ENCODE measurements at regions of chr2 and their contacts with region 1.

Region 1: DNA sequence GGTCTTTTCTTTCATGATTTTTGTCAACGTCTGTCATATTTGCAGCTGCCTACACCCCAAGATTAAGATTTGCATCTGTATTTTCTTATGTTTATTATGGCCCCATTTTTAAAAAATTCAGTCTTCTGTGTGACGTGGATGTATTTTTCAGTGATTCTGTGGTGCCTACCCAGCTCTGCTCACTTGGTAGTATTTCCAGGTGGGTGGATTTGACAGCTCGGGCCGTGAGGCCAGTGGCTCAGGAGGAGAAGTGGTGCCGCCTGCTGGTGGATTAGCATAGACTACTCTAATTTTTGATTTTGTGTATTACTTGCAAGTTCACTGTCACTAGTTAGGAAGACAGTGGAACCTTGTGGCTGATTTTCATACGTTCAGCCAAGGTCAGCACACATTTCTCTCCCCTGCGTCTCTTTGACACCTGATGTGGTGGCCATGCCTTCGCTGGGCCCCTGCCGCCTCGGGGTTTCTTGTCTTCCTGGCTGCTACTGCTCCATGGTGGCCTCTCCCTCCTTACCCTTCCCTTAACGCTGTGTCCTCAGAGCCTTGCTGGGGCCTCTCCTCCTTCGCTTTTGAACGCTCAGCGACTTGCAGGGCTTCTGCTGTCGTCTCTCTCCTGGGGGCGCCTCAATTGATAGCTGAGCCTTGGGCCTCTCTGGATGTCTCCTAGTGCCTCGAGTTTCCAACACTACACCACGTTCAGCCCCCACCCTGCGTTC is 89.3 kb downstream of the DGKD start:
- DNase-seq: peak; percentile 80
- ATAC-seq: peak; percentile 69

Region 2: DNA sequence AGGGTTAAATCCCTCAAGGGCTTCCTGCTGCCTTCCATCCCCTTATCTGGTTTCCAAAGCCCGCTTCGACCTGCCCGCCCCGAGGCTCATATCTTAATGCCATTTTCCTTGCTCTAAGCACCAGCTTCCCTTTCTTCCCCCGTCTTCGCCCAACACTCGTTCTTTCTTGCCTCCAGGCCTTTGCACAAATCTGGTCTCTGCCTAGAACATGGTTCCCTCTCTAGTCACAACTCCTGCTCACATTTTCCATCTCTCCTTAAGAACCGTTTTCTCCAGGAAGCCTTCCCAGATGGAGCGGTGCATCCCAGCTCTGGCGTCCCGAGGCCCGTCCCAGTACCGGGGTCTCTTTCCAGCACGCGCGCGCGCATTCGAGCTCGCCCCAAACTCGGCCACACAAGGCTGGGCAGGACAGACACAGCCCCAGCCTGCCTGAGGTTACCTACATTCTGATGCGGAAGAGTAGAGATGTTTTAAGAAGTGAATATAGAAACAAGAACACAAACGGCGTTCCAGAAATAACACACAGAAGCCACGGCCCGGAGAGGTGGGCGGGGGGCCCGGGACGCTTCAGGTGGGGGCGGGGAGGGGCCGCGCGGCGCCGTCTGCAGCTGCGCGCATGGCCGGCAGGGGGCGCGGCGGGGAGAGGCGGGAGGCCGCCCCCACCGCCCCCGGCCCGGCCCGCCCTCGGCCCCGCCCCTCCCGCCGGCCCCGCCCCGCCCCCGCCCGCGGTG is 89.7 kb before region 1 on chr2 and contains the start of gene DGKD:
- intact Hi-C with region 1: loop called (anchors 10 kb)
- DNase-seq: peak; percentile 83
- ATAC-seq: peak; percentile 82
- total RNA-seq, gene DGKD: 27.1 TPM

Measured in left ventricle myocardium superior (tissue), 1 donor.